ENCODE measurements at regions of chr19 and their contacts with region 1.

Region 1: DNA sequence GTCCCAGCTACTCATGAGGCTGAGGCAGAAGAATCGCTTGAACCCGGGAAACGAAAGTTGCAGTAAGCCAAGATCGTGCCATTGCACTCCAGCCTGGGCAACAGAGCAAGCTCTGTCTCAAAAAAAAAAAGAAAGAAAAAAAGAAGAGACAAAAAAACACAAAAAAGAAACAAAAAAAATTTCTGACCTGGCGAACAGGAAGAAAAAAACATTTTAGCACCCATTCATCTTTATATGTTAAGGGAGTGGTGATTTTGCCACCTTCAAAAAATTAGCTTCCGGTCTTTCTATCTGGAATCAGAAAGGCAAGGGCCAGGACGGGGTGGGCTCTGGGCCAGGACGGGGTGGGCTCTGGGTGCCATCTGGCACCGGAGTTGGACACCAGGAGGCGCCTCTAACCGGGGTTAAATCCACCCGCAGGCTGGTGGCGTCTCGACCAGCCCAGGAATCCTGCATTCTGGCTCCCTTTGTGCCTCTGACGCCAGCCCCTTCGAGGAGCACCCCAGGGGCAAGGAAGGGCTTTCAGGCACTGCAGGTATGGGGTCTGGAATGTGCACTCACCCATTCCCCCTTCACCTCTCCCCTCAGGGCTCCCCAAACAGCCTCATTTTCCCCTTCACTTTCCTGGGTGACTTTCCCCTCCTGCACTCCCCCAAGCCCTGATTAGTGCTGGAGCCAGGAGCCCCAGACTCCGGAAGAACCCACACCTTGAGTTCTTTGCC is 10.4 kb upstream of the ZSWIM4 start:
- DNase-seq: peak; percentile 89
- ATAC-seq: peak; percentile 84 to 87
- H3K4me3 ChIP-seq: no peak overlapping the region
- H3K27ac ChIP-seq: peak overlapping the region; percentile 34
- H3K4me1 ChIP-seq: peaks cover 69% of the 10 kb centered on the region
- H3K27me3 ChIP-seq: no peaks in the 10 kb centered on the region
- CTCF ChIP-seq: peak; percentile 87

Region 2: DNA sequence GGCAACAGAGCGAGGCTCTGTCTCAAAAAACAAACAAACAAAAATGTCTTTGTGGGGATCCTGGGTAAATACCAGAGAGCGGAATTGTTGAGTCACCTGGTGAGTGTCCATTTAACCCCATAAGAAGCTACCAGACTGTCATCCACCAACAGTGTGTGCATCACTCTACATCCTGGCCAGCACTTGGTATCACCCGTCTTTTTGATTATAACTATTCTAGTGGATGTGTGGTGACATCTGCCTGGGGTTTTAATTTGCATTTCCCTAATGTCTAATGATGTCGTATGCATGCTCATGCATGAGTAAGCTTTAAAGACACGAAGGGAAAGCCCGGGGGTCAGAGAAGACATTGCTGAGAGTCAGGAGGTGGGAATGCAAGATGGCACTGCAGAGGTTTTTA is 147.2 kb before region 1 on chr19:
- intact Hi-C with region 1: no loop called
- DNase-seq: no peak
- ATAC-seq: no peak
- H3K4me3 ChIP-seq: no peak overlapping the region
- H3K27ac ChIP-seq: no peak overlapping the region
- H3K4me1 ChIP-seq: no peaks in the 10 kb centered on the region
- H3K27me3 ChIP-seq: peaks cover 4% of the 10 kb centered on the region
- CTCF ChIP-seq: no peak

Region 3: DNA sequence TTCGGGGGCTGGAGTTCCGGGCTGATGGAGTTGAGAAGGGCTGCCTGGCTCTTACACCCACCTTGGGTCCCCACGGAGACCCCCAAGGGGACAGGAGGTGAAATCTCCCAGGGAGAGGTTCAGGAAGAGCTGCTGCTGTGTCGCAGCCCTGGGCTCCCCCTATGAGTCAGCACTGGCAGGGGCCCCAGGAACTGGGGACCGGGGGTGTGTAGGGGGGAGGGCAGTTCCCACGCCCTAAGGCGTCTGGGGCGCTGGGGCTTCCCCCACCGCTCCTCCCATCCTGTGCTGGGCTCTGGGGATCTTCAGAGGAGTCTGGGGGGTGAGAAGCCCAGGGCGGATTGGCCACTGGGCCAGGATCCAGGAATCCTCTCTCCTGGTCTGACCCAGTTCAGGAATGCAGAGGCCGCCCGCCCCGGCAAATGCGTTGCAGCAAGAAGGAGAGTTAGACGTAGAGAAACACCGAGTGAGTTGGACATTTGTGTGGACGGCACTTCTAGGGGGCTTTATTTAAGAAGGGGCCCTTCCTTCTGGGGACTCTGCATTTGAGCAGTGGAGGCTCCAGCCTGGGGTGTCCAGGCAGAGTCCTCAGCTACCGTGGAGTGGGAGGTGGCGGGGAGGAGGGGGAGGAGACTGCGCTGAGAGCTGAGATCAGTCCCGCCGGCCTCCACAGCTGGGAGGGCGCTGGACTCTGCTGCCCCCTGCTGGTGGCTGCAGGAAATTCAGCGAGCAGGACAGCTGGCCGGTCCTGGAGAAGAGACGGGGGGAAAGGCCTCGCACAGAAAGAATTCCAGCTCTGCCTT is 77.0 kb after region 1 on chr19:
- intact Hi-C with region 1: loop called (anchors 10 kb)
- DNase-seq: peak; percentile 95
- ATAC-seq: peak; percentile 94 to 95
- H3K4me3 ChIP-seq: peak overlapping the region; percentile 56
- H3K27ac ChIP-seq: peak overlapping the region; percentile 97
- H3K4me1 ChIP-seq: peaks cover 34% of the 10 kb centered on the region
- H3K27me3 ChIP-seq: no peaks in the 10 kb centered on the region
- CTCF ChIP-seq: peak; percentile 99

Region 4: GRCh38 chr19:13935765-13936510 is 151.0 kb after region 1 on chr19:
- intact Hi-C with region 1: no loop called
- DNase-seq: no peak
- ATAC-seq: no peak
- H3K4me3 ChIP-seq: no peak overlapping the region
- H3K27ac ChIP-seq: no peak overlapping the region
- H3K4me1 ChIP-seq: peaks cover 7% of the 10 kb centered on the region
- H3K27me3 ChIP-seq: peaks cover 13% of the 10 kb centered on the region
- CTCF ChIP-seq: no peak

Measured in lower lobe of right lung (tissue), 2 donors.